Activated naive CD4-positive, alpha-beta T cell treated with anti-CD3 and anti-CD28 coated beads for 36 hours (primary cell): ENCODE measurements at regions of chr14 and their contacts with region 1.

Region 1: GRCh38 chr14:20855652-20856291 is 35.4 kb upstream of the RNASE3 start:
- DNase-seq: peak; percentile 62
- H3K4me3 Mint-ChIP-seq: no peak overlapping the region
- H3K27ac Mint-ChIP-seq: no peak overlapping the region
- H3K4me1 Mint-ChIP-seq: no peaks in the 10 kb centered on the region
- H3K27me3 Mint-ChIP-seq: no peaks in the 10 kb centered on the region

Region 2: GRCh38 chr14:20601482-20602080 is 254.2 kb before region 1 on chr14:
- CTCF ChIA-PET with region 1: no interaction called
- intact Hi-C with region 1: no loop called
- DNase-seq: no peak
- H3K4me3 Mint-ChIP-seq: no peak overlapping the region
- H3K27ac Mint-ChIP-seq: no peak overlapping the region
- H3K4me1 Mint-ChIP-seq: no peaks in the 10 kb centered on the region
- H3K27me3 Mint-ChIP-seq: no peaks in the 10 kb centered on the region

Region 3: DNA sequence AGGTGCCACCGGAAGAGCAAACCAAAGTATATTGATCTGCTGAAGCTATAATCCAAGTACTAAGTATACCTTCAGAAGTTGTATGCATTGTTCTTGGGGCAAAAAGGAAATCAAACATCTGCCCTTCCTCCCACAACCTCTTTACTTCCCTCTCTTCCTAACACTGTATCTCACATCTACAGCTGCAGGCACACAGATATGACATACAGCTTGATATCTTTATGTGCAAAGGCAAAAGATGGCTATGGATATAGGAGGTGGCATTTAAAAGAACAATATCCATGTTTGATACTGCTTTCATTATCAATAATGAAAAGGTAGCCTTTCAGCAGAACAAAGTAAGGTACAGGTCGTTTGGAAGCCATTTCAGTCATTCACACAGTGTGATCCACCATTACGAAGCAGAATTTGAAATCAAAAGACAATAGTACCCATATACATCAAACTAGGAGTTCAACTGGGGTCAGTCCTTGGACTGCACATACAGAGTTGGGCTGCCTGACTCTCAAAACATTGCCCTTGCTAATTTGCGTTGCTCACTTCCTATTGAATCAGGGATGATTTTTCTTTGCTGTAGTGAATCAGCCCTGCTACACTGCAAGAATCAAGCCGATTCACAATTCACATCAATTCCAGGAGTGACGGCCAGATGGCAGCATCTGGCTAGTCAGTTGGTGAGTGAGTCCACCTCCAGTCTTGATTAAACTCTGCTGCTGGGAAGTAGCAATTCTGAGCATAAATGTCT is 158.3 kb before region 1 on chr14:
- CTCF ChIA-PET with region 1: interaction called, 19 read pairs
- intact Hi-C with region 1: loop called (anchors 1 kb)
- DNase-seq: peak; percentile 83
- H3K4me3 Mint-ChIP-seq: no peak overlapping the region
- H3K27ac Mint-ChIP-seq: no peak overlapping the region
- H3K4me1 Mint-ChIP-seq: no peaks in the 10 kb centered on the region
- H3K27me3 Mint-ChIP-seq: no peaks in the 10 kb centered on the region

Region 4: GRCh38 chr14:20757965-20758364 is 97.8 kb before region 1 on chr14:
- CTCF ChIA-PET with region 1: interaction called, 4 read pairs
- intact Hi-C with region 1: loop called (anchors 1 kb)
- DNase-seq: peak; percentile 62
- H3K4me3 Mint-ChIP-seq: no peak overlapping the region
- H3K27ac Mint-ChIP-seq: no peak overlapping the region
- H3K4me1 Mint-ChIP-seq: no peaks in the 10 kb centered on the region
- H3K27me3 Mint-ChIP-seq: no peaks in the 10 kb centered on the region

Region 5: GRCh38 chr14:20866963-20867362 is 11.2 kb after region 1 on chr14:
- CTCF ChIA-PET with region 1: interaction called, 37 read pairs
- intact Hi-C with region 1: no loop called
- DNase-seq: peak; percentile 9
- H3K4me3 Mint-ChIP-seq: no peak overlapping the region
- H3K27ac Mint-ChIP-seq: no peak overlapping the region
- H3K4me1 Mint-ChIP-seq: no peaks in the 10 kb centered on the region
- H3K27me3 Mint-ChIP-seq: peaks cover 12% of the 10 kb centered on the region

Region 6: DNA sequence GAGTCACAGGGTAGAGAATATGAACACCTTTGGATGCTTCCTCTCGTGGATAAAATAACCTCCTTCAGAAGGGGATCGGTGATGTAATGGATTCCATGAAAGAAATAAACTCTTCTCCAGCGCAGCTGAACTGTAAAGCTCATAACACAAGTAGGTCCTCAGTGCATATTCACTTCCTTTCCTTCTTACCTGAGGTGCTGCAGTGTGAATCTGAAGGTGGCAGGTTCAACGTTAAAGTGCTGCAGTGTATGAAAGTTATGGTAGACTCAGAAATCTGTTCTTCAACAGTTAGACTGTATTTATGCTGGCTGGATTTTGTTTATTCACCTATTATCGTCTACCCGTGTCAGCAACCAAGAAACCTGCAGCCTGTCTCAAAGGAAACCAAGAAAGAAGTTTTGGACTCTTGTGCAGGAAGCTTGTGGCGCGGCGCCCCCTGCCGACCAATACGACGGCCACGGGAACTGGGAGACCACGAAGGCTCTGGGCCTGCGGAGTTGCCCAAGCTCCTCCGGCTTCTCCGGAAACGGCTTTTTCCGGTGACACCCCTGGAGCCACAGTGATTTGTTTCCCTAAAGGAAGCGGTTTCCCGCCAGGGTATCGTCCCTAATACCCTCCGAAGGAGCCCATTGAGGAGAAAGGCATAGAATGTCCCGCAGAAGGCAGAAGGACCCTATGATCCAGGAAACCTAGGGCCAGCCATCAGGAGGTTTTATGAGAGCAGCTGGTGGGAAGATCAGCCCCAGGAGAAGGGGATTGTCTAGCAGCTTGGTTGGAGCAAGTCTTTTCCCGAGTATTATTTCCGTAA is 17.8 kb after region 1 on chr14:
- CTCF ChIA-PET with region 1: interaction called, 37 read pairs
- intact Hi-C with region 1: loop called (anchors 1 kb)
- DNase-seq: peak; percentile 93
- H3K4me3 Mint-ChIP-seq: peak overlapping the region; percentile 34
- H3K27ac Mint-ChIP-seq: no peak overlapping the region
- H3K4me1 Mint-ChIP-seq: peaks cover 10% of the 10 kb centered on the region
- H3K27me3 Mint-ChIP-seq: peaks cover 6% of the 10 kb centered on the region

Region 7: GRCh38 chr14:20956376-20956976 is 100.7 kb after region 1 on chr14:
- CTCF ChIA-PET with region 1: interaction called, 6 read pairs
- intact Hi-C with region 1: loop called (anchors 1 kb)
- DNase-seq: no peak
- H3K4me3 Mint-ChIP-seq: no peak overlapping the region
- H3K27ac Mint-ChIP-seq: no peak overlapping the region
- H3K4me1 Mint-ChIP-seq: peaks cover 15% of the 10 kb centered on the region
- H3K27me3 Mint-ChIP-seq: no peaks in the 10 kb centered on the region

Region 8: GRCh38 chr14:21039585-21040369 is 184.0 kb after region 1 on chr14:
- CTCF ChIA-PET with region 1: no interaction called
- intact Hi-C with region 1: loop called (anchors 1 kb)
- DNase-seq: peak; percentile 27
- H3K4me3 Mint-ChIP-seq: no peak overlapping the region
- H3K27ac Mint-ChIP-seq: no peak overlapping the region
- H3K4me1 Mint-ChIP-seq: peaks cover 7% of the 10 kb centered on the region
- H3K27me3 Mint-ChIP-seq: peaks cover 9% of the 10 kb centered on the region